Heart left ventricle (tissue), 16 donors: ENCODE measurements at regions of chr2 and their contacts with region 1.

Region 1: GRCh38 chr2:64330281-64331113 is 123.5 kb upstream of the LGALSL start:
- DNase-seq: peak; percentile 78 to 84 (median 81)
- ATAC-seq: peak; percentile 59 to 77 (median 70)
- H3K4me3 ChIP-seq: peak overlapping the region in 8 of 12 donors; percentile 21 to 38 (median 33)
- H3K27ac ChIP-seq: peak overlapping the region; percentile 48 to 90 (median 77)
- H3K4me1 ChIP-seq: peaks cover 3 to 52% (median 37%) of the 10 kb centered on the region in 12 donors
- H3K27me3 ChIP-seq: no peaks in the 10 kb centered on the region
- CTCF ChIP-seq: peak; percentile 86 to 97 (median 93)
- POLR2A ChIP-seq: no peak

Region 2: DNA sequence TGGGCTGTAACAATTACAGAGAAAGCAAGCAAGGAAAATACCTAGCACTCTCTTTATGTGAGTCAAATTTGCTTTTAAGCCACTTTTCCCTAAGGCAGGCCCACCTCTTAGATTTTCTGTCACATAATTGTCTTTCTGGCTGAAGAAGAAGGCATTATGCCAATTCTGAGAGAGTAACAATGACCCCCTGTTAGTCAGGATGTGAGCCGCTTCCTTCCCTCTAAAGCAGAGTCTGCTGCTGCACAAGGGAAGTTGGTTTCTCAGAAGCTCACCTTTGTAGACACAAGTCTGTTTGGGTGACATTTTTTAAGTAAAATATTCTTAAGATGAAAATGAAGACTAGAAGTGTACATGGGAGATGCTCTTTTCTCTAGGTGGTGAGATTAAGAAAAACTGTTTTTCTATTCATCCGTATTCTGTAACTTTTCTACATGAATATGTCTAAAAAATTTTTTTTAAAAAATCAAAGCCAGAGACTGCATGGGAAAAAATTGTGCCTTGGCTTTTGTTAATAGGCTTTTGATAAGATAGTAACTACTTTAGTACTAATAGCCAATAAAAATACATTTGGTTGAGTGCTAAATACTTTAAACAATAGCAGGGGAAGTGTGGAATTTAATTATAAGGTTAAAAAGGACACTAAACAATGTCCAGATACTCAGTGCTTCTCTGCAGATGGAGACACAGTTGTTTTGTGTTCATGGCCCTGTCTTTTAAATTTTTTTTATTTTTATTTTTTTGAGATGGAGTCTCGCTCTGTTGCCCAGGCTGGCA is 277.8 kb before region 1 on chr2:
- intact Hi-C with region 1: loop called (anchors 1 to 5 kb)
- DNase-seq: peak in 2 of 5 donors; percentile 30 to 37
- ATAC-seq: peak; percentile 72 to 91 (median 74)
- H3K4me3 ChIP-seq: no peak overlapping the region
- H3K27ac ChIP-seq: peak overlapping the region; percentile 14 to 84 (median 74)
- H3K4me1 ChIP-seq: peaks cover 0 to 30% (median 5%) of the 10 kb centered on the region in 12 donors
- H3K27me3 ChIP-seq: no peaks in the 10 kb centered on the region
- CTCF ChIP-seq: no peak
- POLR2A ChIP-seq: no peak

Region 3: DNA sequence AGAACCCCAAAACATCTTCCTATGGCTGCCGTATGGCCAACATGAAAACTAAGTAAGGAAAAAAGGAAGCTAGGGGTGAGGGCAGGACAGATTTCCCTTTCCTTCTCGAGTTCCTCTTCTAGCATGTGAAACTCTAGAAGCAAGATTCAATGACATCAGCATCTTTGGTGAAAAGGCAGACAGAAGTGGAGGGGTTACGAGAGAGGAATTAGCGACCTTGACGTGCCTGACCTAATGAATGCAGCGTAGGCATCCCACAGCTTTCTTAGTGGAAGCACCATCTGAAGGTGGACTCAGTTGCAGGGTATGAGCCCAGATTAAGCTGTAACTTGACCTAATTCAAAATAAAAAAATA is 138.4 kb before region 1 on chr2:
- intact Hi-C with region 1: no loop called
- DNase-seq: no peak
- ATAC-seq: peak; percentile 47 to 80 (median 68)
- H3K4me3 ChIP-seq: no peak overlapping the region
- H3K27ac ChIP-seq: peak overlapping the region in 4 of 12 donors; percentile 13 to 89 (median 34)
- H3K4me1 ChIP-seq: peaks cover 0 to 53% (median 0%) of the 10 kb centered on the region in 12 donors
- H3K27me3 ChIP-seq: no peaks in the 10 kb centered on the region
- CTCF ChIP-seq: no peak
- POLR2A ChIP-seq: no peak

Region 4: DNA sequence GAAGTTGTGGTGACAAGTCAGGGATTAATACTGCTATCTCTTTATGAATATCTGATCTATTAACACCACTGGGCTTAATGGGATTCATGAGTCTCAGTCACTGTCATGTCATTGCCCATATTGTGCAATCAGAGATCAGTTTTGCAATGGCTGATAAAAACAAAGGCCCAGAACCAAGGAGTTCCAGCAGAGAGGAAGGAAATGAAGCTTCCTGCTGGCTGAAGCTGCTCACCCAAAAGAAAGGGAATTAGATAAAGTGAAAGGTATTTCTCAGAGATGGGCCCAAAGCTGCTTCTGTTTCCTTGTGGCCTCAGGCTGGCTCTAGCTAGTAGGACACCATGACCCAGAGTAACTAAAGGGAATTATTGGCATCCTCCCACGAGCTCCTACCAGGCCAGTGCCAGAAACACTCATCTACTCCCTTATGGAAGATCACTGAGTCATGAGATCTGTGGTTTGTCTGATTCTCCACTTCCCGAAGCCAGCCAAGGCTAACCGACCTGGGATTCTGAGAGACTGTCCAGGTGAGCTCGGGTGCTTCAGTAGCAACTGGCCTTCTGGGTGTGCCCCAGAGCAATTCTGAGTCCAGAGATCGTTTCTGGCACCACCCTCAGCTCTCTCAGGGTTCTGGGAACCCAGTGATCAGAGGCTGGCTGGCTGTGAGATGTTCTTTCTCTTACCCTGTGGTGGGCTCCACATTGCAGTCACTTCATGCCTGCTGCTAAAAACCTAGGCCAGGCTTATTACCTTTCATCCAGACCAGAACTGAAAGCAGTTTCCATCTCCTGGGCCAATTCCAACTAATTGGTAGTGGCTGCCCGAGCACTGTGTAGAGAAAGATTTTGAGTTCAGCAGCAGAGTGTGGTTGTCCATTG is 56.7 kb before region 1 on chr2:
- intact Hi-C with region 1: loop called in 1 of 10 experiments (anchors 5 kb)
- DNase-seq: peak in 4 of 5 donors; percentile 39 to 52 (median 45)
- ATAC-seq: peak; percentile 85 to 93 (median 92)
- H3K4me3 ChIP-seq: peak overlapping the region in 4 of 12 donors; percentile 13 to 27 (median 16)
- H3K27ac ChIP-seq: peak overlapping the region; percentile 58 to 93 (median 75)
- H3K4me1 ChIP-seq: peaks cover 0 to 56% (median 24%) of the 10 kb centered on the region in 12 donors
- H3K27me3 ChIP-seq: no peaks in the 10 kb centered on the region
- CTCF ChIP-seq: no peak
- POLR2A ChIP-seq: no peak

Region 5: GRCh38 chr2:64374686-64375085 is 44.2 kb after region 1 on chr2:
- intact Hi-C with region 1: no loop called
- DNase-seq: peak in 2 of 5 donors; percentile 38 to 56
- ATAC-seq: peak in 3 of 4 donors; percentile 50 to 53 (median 53)
- H3K4me3 ChIP-seq: no peak overlapping the region
- H3K27ac ChIP-seq: no peak overlapping the region
- H3K4me1 ChIP-seq: peaks cover 0 to 9% (median 0%) of the 10 kb centered on the region in 12 donors
- H3K27me3 ChIP-seq: peaks cover 0 to 13% (median 1%) of the 10 kb centered on the region in 9 donors
- CTCF ChIP-seq: no peak
- POLR2A ChIP-seq: no peak

Region 6: DNA sequence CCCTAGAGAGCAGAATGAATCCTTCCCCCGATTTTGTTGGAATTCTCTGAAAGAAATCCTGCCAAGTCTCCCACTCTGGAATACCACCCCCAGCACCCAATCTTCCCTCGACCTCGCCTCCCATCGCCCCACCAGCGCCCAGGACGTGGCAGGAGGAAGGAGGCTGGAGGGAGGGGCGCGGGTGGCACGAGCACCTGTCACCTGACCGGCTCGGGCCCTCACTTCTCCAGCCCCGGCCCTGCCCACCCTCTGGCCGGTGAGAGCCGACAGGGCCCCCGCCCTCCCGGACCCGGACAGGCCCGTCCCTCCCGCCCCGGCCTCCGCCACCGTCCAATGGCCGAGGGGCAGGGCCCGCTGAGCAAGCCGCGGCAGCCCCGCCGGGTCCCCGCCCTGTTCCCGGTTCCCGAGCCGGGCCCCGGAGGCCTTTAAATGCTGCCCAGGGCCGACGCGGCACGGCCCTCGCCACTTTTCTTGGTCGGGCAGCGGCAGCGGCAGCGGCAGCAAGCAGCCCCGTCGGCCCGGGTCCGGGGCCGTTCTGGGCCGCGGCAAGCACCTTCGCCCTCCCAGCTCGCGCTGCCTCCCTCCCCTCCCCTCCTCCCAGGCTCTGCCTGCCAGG is 123.4 kb after region 1 on chr2 and contains the start of gene LGALSL:
- intact Hi-C with region 1: loop called in 1 of 10 experiments (anchors 10 kb)
- DNase-seq: peak; percentile 81 to 89 (median 82)
- ATAC-seq: peak; percentile 68 to 91 (median 89)
- H3K4me3 ChIP-seq: peak within 1 kb of the TSS; percentile 74 to 93 (median 80)
- H3K27ac ChIP-seq: peak within 1 kb of the TSS; percentile 87 to 98 (median 94)
- H3K4me1 ChIP-seq: peaks cover 0 to 38% (median 18%) of the 10 kb centered on the region in 12 donors
- H3K27me3 ChIP-seq: peaks cover 0 to 11% (median 0%) of the 10 kb centered on the region in 9 donors
- CTCF ChIP-seq: no peak
- POLR2A ChIP-seq: peak in 1 of 2 donors; percentile 70
- total RNA-seq, gene LGALSL: 6.4 to 31.6 (median 11.8) TPM

Region 7: DNA sequence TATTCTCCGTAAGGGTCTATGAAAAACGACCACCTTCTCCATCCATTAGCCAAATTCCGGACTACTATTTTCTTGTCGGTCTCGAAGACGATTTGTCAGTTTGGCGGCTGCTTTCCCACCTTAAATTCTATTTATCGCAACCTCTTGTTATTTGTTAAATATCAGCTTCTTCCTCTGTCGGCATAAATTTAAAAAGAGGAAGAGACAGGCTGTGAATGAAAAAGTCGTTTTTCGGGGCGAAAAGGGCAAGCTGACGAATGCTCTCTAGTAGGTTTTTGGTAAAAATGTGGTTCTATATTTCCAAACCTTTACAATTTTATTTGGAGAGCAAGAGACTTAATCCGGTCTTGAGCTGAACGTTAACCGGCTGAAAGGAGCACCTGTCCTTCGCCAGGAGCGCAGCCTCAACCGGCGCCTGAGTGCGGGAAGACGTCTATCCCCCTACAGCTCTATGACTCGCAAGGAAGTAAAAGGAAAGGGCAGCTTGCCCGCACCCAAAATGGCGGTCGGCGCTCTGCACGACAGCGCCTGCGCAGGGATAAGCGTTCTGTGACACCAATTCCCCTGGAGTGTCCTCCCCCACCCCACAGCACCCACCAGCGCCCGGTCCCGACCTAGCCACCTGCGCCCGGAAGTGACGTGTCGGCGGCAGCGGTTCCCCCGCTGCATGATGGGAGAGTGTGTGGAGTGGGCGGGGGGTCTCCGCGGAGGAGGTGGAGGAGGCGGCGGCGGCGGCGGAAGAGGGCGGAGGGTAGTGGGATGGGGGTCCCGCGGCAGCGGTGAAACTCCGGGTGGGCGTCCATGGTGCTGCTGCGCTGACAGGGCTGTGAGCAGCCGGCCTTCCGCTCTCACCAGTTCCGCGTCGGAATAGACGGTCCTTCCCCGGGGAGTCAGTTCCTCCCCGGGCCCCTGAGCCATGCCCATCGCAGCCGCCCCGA is 193.4 kb after region 1 on chr2 and contains the start of gene AFTPH:
- intact Hi-C with region 1: loop called in 1 of 10 experiments (anchors 1 kb)
- DNase-seq: peak; percentile 99 to 100 (median 99)
- ATAC-seq: peak; percentile 99 to 100 (median 99)
- H3K4me3 ChIP-seq: peak within 1 kb of the TSS; percentile 70 to 97 (median 94)
- H3K27ac ChIP-seq: peak within 1 kb of the TSS; percentile 85 to 98 (median 94)
- H3K4me1 ChIP-seq: peaks cover 0 to 42% (median 28%) of the 10 kb centered on the region in 12 donors
- H3K27me3 ChIP-seq: no peaks in the 10 kb centered on the region
- CTCF ChIP-seq: no peak
- POLR2A ChIP-seq: peak in 1 of 2 donors; percentile 77
- total RNA-seq, gene AFTPH: 9.2 to 15.2 (median 11.4) TPM

Region 8: DNA sequence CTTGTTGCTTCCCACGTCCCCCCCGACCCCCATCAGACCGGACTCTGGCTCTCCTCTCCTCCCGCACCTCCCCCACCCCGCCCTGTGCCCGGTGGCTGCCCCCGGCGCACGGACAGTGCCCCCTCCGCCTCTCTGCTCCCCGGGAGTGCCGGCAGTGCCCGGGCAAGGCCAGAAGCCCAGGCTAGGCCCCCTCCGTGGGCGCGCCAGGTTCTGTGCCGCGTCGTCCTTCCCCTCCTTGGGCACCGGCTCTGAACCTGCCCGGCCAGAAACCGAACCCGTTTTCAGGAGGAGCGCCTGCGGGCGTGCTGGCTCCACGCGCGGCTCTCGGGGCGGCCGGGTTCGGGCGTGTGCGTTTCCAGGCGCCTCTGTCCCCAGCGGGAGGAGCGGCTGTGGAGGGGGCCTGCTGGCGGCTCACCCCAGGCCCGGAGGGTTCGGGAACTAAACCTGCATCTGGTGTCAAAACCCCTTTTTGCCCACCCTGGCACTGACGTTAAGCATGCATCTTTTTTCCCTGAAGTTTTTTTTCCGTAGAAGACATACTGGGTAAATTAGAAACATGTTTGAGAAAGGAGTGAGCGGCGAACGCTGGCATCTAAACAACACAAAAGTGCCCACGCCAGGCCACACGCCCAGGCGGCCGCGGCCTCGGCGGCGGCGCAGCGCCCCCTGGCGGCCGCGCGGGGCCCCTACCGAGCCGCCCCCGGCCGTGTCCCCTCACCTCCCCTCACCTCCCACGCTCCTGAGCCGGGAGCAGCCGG is 534.8 kb after region 1 on chr2:
- intact Hi-C with region 1: loop called in 5 of 10 experiments (anchors 5 to 10 kb)
- DNase-seq: peak; percentile 68 to 82 (median 71)
- ATAC-seq: peak; percentile 62 to 90 (median 80)
- H3K4me3 ChIP-seq: peak overlapping the region; percentile 47 to 88 (median 82)
- H3K27ac ChIP-seq: peak overlapping the region; percentile 77 to 94 (median 90)
- H3K4me1 ChIP-seq: peaks cover 0 to 58% (median 6%) of the 10 kb centered on the region in 12 donors
- H3K27me3 ChIP-seq: no peaks in the 10 kb centered on the region
- CTCF ChIP-seq: peak; percentile 28 to 100 (median 81)
- POLR2A ChIP-seq: no peak